ENCODE measurements at regions of chr1 and their contacts with region 1.

Region 1: DNA sequence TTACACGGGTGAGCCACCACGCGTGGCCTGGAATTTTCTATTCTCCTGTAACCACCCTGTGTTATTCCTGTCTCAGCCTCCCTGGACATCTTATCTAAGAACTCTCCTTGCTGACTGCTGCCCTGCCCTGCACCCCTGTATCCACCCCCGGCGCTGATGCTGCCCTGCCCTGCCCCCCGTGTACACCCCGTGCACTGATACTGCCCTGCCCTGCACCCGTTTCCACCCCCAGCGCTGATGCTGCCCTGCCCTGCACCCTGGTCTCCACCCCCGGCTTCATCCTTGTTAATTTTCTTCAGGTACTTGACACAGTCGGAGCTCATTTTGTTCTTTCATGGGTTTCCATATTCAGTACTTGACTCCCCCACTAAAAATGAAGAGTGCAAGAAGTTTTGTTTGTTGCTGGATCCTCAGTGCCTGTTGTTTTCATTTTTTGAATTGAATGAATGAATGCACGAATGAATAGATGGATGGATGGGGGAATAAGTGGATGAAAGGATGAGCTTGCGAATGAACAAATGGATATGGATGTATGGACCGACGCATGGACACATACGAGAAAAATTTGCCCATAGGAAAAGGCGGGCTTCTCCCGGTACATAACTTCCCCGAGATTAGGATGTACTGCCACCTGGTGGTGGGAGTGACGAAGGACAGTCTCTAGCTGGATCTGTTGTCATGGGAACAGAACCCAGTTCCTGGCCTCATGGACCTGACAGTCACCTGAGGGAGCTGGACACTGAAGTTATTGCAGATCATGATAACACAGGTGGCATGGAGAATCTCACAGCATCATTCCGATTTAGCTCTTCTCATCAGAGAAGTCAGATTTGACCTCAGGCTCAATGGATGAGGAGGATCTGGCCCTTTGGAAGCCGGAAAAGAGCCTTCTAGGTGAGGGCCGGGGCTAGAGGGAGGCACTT is 14.9 kb downstream of the AADACL4 start:
- DNase-seq: peak; percentile 82
- ATAC-seq: peak; percentile 74
- H3K4me3 Mint-ChIP-seq: no peak overlapping the region
- H3K27ac Mint-ChIP-seq: no peak overlapping the region
- H3K4me1 Mint-ChIP-seq: peaks cover 4% of the 10 kb centered on the region
- H3K27me3 Mint-ChIP-seq: no peaks in the 10 kb centered on the region

Region 2: GRCh38 chr1:12113433-12114339 is 545.1 kb before region 1 on chr1:
- CTCF ChIA-PET with region 1: no interaction called
- POLR2A ChIA-PET with region 1: no interaction called
- intact Hi-C with region 1: loop called in 1 of 2 experiments (anchors 2 kb)
- DNase-seq: no peak
- ATAC-seq: peak; percentile 28
- H3K4me3 Mint-ChIP-seq: no peak overlapping the region
- H3K27ac Mint-ChIP-seq: no peak overlapping the region
- H3K4me1 Mint-ChIP-seq: peaks cover 5% of the 10 kb centered on the region
- H3K27me3 Mint-ChIP-seq: no peaks in the 10 kb centered on the region

Region 3: GRCh38 chr1:12269351-12269750 is 389.4 kb before region 1 on chr1:
- CTCF ChIA-PET with region 1: interaction called, 13 read pairs
- POLR2A ChIA-PET with region 1: no interaction called
- intact Hi-C with region 1: no loop called
- DNase-seq: no peak
- ATAC-seq: no peak
- H3K4me3 Mint-ChIP-seq: no peak overlapping the region
- H3K27ac Mint-ChIP-seq: no peak overlapping the region
- H3K4me1 Mint-ChIP-seq: no peaks in the 10 kb centered on the region
- H3K27me3 Mint-ChIP-seq: no peaks in the 10 kb centered on the region

Region 4: GRCh38 chr1:12314333-12314903 is 344.4 kb before region 1 on chr1:
- CTCF ChIA-PET with region 1: interaction called, 14 read pairs
- POLR2A ChIA-PET with region 1: no interaction called
- intact Hi-C with region 1: loop called (anchors 1 to 2 kb)
- DNase-seq: no peak
- ATAC-seq: no peak
- H3K4me3 Mint-ChIP-seq: no peak overlapping the region
- H3K27ac Mint-ChIP-seq: no peak overlapping the region
- H3K4me1 Mint-ChIP-seq: no peaks in the 10 kb centered on the region
- H3K27me3 Mint-ChIP-seq: no peaks in the 10 kb centered on the region

Region 5: GRCh38 chr1:12669529-12670068 is 10.8 kb after region 1 on chr1:
- CTCF ChIA-PET with region 1: interaction called, 10 read pairs
- POLR2A ChIA-PET with region 1: no interaction called
- intact Hi-C with region 1: no loop called
- DNase-seq: no peak
- ATAC-seq: no peak
- H3K4me3 Mint-ChIP-seq: no peak overlapping the region
- H3K27ac Mint-ChIP-seq: no peak overlapping the region
- H3K4me1 Mint-ChIP-seq: no peaks in the 10 kb centered on the region
- H3K27me3 Mint-ChIP-seq: peaks cover 7% of the 10 kb centered on the region

Measured in activated CD4-positive, alpha-beta T cell treated with anti-CD3 and anti-CD28 coated beads for 36 hours (primary cell).